ENCODE measurements at regions of chr3 and their contacts with region 1.

Region 1: GRCh38 chr3:184711493-184712247 is at the start of gene MAGEF1:
- DNase-seq: peak; percentile 83
- ATAC-seq: peak; percentile 93
- H3K4me3 Mint-ChIP-seq: peak within 1 kb of the TSS; percentile 85
- H3K27ac Mint-ChIP-seq: peak within 1 kb of the TSS; percentile 89
- H3K4me1 Mint-ChIP-seq: peaks cover 26% of the 10 kb centered on the region
- H3K27me3 Mint-ChIP-seq: no peaks in the 10 kb centered on the region
- CTCF ChIP-seq: no peak
- total RNA-seq, gene MAGEF1: 19.2 to 19.3 TPM

Region 2: GRCh38 chr3:184561061-184561912 is 150.4 kb before region 1 on chr3 and contains the start of gene EPHB3:
- CTCF ChIA-PET with region 1: interaction called, 12 read pairs
- POLR2A ChIA-PET with region 1: no interaction called
- intact Hi-C with region 1: no loop called
- DNase-seq: peak; percentile 99
- ATAC-seq: peak; percentile 92
- H3K4me3 Mint-ChIP-seq: peak within 1 kb of the TSS; percentile 50
- H3K27ac Mint-ChIP-seq: peak within 1 kb of the TSS; percentile 32
- H3K4me1 Mint-ChIP-seq: peaks cover 23% of the 10 kb centered on the region
- H3K27me3 Mint-ChIP-seq: peaks cover 23% of the 10 kb centered on the region
- CTCF ChIP-seq: peak; percentile 93
- total RNA-seq, gene EPHB3: 0.07 TPM in 1 of 2 experiments, not detected in the other

Region 3: DNA sequence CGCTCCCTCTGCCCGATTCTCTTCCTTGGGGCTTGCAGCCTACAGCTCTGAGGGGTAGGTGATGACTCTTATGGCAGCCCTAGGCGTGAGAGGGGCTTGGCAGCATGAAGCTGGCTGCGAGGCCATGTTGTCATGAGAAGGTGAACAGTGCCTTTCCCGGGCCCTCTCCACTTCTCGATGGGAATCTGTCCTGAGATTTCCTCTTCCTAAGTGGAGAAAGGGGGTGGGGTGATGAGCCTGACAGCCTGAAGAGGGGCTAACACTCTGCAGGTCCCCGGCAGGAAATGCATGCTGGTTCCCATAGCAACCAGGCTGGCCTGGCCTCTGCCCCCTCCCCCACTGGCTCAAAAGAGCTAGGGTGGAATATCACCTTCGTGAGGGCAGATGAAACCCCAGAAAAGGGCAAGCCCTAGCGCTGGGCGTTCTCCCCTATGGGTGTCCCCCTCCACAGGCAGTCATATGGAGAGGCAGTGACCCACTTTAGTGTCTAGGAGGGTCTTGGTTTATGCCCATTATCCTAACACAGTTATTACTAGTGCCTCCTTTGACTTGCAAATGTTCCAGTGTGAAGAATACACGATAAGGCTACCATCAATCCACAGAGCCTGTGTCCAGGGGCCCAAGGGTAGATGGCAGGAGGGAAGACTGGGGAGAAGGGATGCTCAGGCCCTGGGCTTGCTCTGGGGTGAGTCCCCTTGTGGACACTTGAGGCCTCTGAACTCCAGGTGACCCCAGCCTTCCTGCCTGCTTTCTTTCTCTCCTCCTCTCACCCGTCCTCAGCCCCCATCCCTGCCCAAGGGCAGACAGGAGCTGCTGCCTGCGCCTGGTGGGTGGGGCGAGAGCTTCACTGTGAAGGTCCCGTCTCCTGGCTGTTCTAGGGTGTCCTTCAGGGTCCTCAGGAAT is 136.9 kb before region 1 on chr3:
- CTCF ChIA-PET with region 1: no interaction called
- POLR2A ChIA-PET with region 1: no interaction called
- intact Hi-C with region 1: loop called (anchors 5 kb)
- DNase-seq: no peak
- ATAC-seq: no peak
- H3K4me3 Mint-ChIP-seq: no peak overlapping the region
- H3K27ac Mint-ChIP-seq: no peak overlapping the region
- H3K4me1 Mint-ChIP-seq: no peaks in the 10 kb centered on the region
- H3K27me3 Mint-ChIP-seq: peaks cover 12% of the 10 kb centered on the region
- CTCF ChIP-seq: no peak

Region 4: DNA sequence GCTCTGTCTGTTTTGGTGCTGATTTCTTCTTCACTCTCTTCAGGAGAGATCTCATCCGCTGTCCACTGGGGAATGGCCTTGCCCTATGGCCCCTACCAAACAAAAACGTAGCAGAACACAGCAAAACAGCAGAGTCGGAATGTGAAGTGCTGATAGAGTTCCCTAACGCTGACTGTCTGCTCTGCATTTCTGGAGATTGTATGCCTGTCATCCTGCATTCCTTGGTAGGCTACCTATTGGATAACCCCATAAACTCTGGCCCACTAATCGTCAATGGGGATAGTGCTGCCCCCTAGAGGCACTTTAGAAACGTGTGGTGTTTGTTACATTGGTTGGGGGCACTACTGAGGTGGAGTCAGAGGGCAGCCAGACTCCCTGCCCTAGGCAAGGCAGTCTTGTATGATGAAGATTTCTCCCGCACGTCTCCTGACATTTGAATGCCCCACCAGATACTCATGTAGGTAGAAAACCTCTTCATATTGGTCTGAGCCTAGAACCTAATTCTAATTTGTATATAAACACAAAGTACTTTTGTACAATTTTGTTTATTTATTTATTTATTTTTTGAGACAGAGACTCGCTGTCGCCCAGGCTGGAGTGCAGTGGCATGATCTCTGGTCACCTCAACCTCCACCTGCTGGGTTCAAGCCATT is 15.8 kb after region 1 on chr3:
- CTCF ChIA-PET with region 1: interaction called, 15 read pairs
- POLR2A ChIA-PET with region 1: no interaction called
- intact Hi-C with region 1: no loop called
- DNase-seq: peak; percentile 70
- ATAC-seq: peak; percentile 87
- H3K4me3 Mint-ChIP-seq: no peak overlapping the region
- H3K27ac Mint-ChIP-seq: no peak overlapping the region
- H3K4me1 Mint-ChIP-seq: no peaks in the 10 kb centered on the region
- H3K27me3 Mint-ChIP-seq: peaks cover 10% of the 10 kb centered on the region
- CTCF ChIP-seq: peak; percentile 66

Measured in activated CD8-positive, alpha-beta T cell treated with anti-CD3 and anti-CD28 coated beads for 36 hours (primary cell).